CD4-positive, alpha-beta T cell (primary cell): ENCODE measurements at regions of chr5 and their contacts with region 1.

Region 1: GRCh38 chr5:126776497-126777256 is at the start of gene LMNB1:
- DNase-seq: peak; percentile 87 to 97 (median 92)
- ATAC-seq: peak; percentile 66
- H3K4me3 ChIP-seq: peak within 1 kb of the TSS; percentile 97
- H3K4me3 Mint-ChIP-seq: peak within 1 kb of the TSS; percentile 87
- H3K27ac ChIP-seq: peak within 1 kb of the TSS; percentile 77 to 96
- H3K27ac Mint-ChIP-seq: peak within 1 kb of the TSS; percentile 93
- H3K4me1 ChIP-seq: peaks cover 28% of the 10 kb centered on the region
- H3K4me1 Mint-ChIP-seq: peaks cover 23% of the 10 kb centered on the region
- H3K27me3 ChIP-seq: no peaks in the 10 kb centered on the region
- H3K27me3 Mint-ChIP-seq: no peaks in the 10 kb centered on the region
- CTCF ChIP-seq: peak; percentile 16
- total RNA-seq, gene LMNB1: 30.6 to 31.1 TPM

Region 2: DNA sequence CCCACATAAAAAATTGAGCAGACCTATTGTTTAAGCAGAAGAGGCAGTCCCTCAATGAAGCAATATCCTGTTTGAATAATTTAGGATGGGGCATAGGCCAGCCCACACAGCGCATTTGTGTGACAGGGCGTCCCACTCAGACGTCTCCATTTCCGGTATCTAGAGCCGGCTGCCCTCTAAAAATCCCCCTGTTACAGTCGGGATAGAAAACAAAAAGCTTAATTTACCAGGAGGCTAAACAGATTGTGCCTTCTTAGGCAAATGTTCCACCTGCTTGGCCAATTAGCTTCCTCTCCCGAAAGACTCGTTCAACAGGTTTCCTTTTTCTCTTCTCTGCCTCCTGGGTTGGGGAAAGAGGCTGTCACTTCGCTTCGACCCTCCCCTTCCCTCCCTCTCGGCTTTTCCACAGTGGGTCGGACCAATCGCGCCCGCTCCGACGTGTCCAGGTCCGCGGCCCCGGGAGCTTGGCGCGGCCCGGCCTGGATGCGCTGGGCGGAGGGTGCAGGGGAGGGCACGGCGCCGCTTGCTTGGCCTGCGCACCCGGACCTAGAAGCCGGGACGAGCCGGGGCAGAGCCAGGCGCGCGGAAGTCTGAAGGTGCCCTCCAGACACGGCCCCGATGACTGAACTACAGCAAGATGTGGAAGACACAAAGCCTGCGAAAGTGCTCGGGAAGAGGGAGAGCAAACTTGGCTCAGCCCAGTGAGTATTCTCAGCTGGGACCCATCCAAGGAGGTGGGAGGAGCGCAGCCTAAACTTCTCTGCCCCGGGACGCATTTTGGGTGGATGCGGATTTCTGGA is 353.5 kb before region 1 on chr5 and contains the start of gene GRAMD2B:
- CTCF ChIA-PET with region 1: no interaction called
- POLR2A ChIA-PET with region 1: interaction called, 15 read pairs
- intact Hi-C with region 1: loop called in 1 of 2 experiments (anchors 10 kb)
- DNase-seq: peak; percentile 38 to 88 (median 57)
- ATAC-seq: peak; percentile 95
- H3K4me3 ChIP-seq: peak within 1 kb of the TSS; percentile 72
- H3K4me3 Mint-ChIP-seq: peak within 1 kb of the TSS; percentile 99
- H3K27ac ChIP-seq: peak within 1 kb of the TSS; percentile 81 to 82
- H3K27ac Mint-ChIP-seq: peak within 1 kb of the TSS; percentile 93
- H3K4me1 ChIP-seq: peaks cover 10% of the 10 kb centered on the region
- H3K4me1 Mint-ChIP-seq: peaks cover 48% of the 10 kb centered on the region
- H3K27me3 ChIP-seq: no peaks in the 10 kb centered on the region
- H3K27me3 Mint-ChIP-seq: no peaks in the 10 kb centered on the region
- CTCF ChIP-seq: no peak
- total RNA-seq, gene GRAMD2B: 7.2 to 9.4 TPM

Region 3: DNA sequence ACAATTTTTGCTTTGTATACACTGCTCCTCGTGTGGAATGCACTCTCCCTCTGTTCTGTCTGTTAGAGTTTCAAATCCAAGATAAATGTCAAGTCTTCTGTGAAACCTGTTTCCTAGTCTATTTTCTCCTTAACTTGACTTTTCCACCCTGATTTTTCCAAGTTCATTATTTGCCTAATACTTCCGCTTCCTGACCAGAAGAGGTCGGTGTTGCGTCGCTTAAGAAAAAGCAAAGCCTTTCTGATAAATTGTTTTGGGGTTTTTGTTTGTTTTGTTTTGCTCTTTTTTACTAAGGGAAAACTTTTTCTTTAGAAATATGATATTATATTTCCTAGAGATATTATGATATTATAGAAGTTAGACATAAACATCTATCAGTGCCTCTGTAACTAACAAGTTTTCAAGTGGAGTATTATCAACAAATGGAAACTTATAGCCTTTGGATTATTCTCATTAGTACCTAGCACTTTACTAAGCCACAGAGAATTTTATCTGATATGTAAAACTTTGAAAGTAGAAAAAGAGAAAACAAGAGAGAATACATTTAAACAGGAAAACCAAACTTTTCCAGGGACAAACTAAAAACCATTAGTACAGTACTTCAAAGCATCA is 120.2 kb before region 1 on chr5:
- CTCF ChIA-PET with region 1: interaction called, 8 read pairs
- POLR2A ChIA-PET with region 1: interaction called, 5 read pairs
- intact Hi-C with region 1: loop called (anchors 1 to 5 kb)
- DNase-seq: peak in 4 of 14 experiments; percentile 40 to 67 (median 56)
- ATAC-seq: no peak
- H3K4me3 ChIP-seq: no peak overlapping the region
- H3K4me3 Mint-ChIP-seq: no peak overlapping the region
- H3K27ac ChIP-seq: no peak overlapping the region
- H3K27ac Mint-ChIP-seq: no peak overlapping the region
- H3K4me1 ChIP-seq: no peaks in the 10 kb centered on the region
- H3K4me1 Mint-ChIP-seq: no peaks in the 10 kb centered on the region
- H3K27me3 ChIP-seq: no peaks in the 10 kb centered on the region
- H3K27me3 Mint-ChIP-seq: no peaks in the 10 kb centered on the region
- CTCF ChIP-seq: peak; percentile 83

Region 4: DNA sequence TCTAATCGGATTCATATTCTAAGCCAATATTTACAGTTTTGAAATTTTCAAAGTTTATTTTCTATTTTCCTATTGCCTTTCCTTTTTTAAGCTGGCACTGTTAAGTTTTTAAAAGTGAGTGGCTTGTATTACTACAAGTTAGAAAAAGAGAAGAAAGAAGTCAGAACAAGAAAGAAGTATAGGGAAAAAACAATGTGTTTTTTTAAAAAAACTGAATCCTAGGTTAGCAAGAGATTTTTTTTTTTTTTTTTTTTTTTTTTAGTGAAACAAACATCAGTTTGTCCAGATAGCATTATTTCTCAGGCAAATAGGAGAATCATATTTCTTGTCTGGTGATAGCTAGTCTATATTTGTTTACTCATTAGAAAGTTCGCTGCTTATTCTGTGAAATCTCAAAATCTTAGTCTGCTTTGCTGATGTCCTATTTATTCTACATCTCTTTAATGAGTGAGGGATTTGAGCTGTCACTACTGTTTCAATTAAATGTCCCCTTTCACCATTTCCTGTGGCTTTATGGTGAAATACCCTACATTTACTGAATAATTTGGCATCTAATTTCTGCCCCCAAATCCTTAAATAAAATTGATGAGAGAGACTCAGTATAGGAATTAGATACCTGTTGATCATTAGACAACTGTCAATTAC is 18.8 kb before region 1 on chr5:
- CTCF ChIA-PET with region 1: interaction called, 5 read pairs
- POLR2A ChIA-PET with region 1: interaction called, 19 read pairs
- intact Hi-C with region 1: no loop called
- DNase-seq: no peak
- ATAC-seq: no peak
- H3K4me3 ChIP-seq: no peak overlapping the region
- H3K4me3 Mint-ChIP-seq: no peak overlapping the region
- H3K27ac ChIP-seq: no peak overlapping the region
- H3K27ac Mint-ChIP-seq: peak overlapping the region; percentile 45
- H3K4me1 ChIP-seq: peaks cover 8% of the 10 kb centered on the region
- H3K4me1 Mint-ChIP-seq: peaks cover 22% of the 10 kb centered on the region
- H3K27me3 ChIP-seq: no peaks in the 10 kb centered on the region
- H3K27me3 Mint-ChIP-seq: no peaks in the 10 kb centered on the region
- CTCF ChIP-seq: no peak

Region 5: DNA sequence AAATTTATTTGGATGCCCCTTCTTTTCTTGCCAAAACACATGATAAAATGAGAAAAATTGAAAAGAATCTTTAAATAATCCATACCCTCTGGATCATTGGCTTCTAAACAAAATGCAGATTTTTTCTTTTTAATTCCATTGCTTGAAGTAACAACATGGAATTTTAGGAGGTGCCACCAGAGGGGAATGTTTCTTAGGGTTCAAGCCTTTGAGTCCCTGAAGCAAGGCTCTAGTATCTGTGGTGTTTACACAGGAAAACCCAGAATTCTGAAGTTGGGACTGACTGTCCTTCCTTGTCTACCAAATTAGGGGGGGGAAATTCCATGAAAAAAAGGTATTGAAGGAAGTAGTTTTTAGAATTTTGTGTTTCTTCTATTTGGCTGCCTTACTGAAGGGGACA is 69.7 kb after region 1 on chr5:
- CTCF ChIA-PET with region 1: no interaction called
- POLR2A ChIA-PET with region 1: interaction called, 50 read pairs
- intact Hi-C with region 1: no loop called
- DNase-seq: no peak
- ATAC-seq: no peak
- H3K4me3 ChIP-seq: no peak overlapping the region
- H3K4me3 Mint-ChIP-seq: no peak overlapping the region
- H3K27ac ChIP-seq: peak overlapping the region in 1 of 2 donors; percentile 24
- H3K27ac Mint-ChIP-seq: peak overlapping the region; percentile 90
- H3K4me1 ChIP-seq: peaks cover 13% of the 10 kb centered on the region
- H3K4me1 Mint-ChIP-seq: peaks cover 37% of the 10 kb centered on the region
- H3K27me3 ChIP-seq: no peaks in the 10 kb centered on the region
- H3K27me3 Mint-ChIP-seq: no peaks in the 10 kb centered on the region
- CTCF ChIP-seq: no peak

Region 6: DNA sequence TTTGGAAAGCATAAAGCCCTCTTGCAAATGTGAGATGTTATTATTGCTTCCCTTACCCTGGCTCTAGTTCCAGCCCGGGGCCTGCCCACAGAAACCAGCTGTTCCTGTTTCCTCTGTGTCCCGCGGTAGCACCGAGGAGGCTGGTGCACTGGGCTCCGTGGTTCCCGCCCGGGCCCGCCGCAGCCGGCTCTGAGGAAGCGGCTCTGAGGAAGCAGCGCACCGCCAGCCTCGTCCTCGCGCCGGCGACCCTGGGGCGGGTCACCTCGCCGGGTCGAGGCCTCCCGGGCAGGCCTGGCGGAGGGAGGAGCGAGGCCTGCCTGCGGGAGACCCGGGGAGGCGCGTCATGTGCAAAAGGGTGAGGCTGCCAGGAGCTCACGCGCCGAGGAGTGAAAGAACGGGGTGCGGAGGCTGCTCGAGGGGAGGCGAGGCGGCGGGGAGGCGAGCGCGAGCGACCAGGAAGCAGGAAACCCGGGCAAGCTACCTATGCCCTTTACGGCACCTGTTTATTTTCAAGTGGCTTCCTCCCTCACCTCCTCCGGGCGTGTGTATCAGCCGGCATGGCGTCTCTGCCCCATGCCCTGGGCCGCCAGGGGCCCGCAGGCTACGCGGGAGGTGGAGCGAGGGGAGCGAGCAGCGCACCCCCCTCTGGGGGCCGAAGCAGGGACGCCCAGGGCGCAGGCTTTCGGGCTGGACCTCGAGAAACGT is 452.7 kb after region 1 on chr5:
- CTCF ChIA-PET with region 1: no interaction called
- POLR2A ChIA-PET with region 1: interaction called, 27 read pairs
- intact Hi-C with region 1: no loop called
- DNase-seq: peak; percentile 25 to 72 (median 50)
- ATAC-seq: peak; percentile 84
- H3K4me3 ChIP-seq: peak overlapping the region; percentile 63
- H3K4me3 Mint-ChIP-seq: peak overlapping the region; percentile 87
- H3K27ac ChIP-seq: peak overlapping the region; percentile 62 to 63
- H3K27ac Mint-ChIP-seq: peak overlapping the region; percentile 55
- H3K4me1 ChIP-seq: peaks cover 16% of the 10 kb centered on the region
- H3K4me1 Mint-ChIP-seq: peaks cover 23% of the 10 kb centered on the region
- H3K27me3 ChIP-seq: no peaks in the 10 kb centered on the region
- H3K27me3 Mint-ChIP-seq: no peaks in the 10 kb centered on the region
- CTCF ChIP-seq: no peak

Region 7: GRCh38 chr5:128711216-128711615 is 1934.5 kb after region 1 on chr5:
- CTCF ChIA-PET with region 1: no interaction called
- POLR2A ChIA-PET with region 1: no interaction called
- intact Hi-C with region 1: no loop called
- DNase-seq: no peak
- ATAC-seq: no peak
- H3K4me3 ChIP-seq: no peak overlapping the region
- H3K4me3 Mint-ChIP-seq: no peak overlapping the region
- H3K27ac ChIP-seq: no peak overlapping the region
- H3K27ac Mint-ChIP-seq: no peak overlapping the region
- H3K4me1 ChIP-seq: no peaks in the 10 kb centered on the region
- H3K4me1 Mint-ChIP-seq: no peaks in the 10 kb centered on the region
- H3K27me3 ChIP-seq: no peaks in the 10 kb centered on the region
- H3K27me3 Mint-ChIP-seq: no peaks in the 10 kb centered on the region
- CTCF ChIP-seq: no peak